ENCODE measurements at regions of chr1 and their contacts with region 1.

Region 1: DNA sequence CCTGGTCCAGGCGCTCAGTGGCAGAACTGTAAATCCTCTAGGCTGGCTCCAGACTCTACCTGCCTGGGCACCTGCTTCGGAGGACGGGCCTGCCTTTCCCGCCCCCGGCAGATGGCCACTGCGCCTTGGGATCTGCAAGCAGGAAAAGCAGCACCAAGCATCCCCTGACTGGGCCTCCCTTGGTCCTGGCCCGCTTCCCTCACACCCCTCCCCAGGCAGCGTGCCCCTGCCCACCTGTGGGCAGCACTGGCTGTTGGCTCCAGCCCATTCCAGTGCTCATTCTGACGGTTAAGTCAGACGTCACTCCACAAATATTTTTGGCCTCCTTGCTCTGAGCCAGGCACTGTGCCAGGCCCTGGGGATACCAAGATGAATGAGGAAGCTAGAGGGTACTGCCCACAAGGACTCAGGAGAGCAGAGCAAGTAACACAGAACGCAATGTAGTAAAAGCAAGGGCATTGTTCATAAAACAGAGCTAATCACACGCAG is 22.0 kb upstream of the BLACAT1 start:
- DNase-seq: peak; percentile 60 to 79 (median 79)
- ATAC-seq: peak; percentile 89
- H3K4me3 ChIP-seq: no peak overlapping the region
- H3K4me1 ChIP-seq: peaks cover 4% of the 10 kb centered on the region
- CTCF ChIP-seq: no peak

Region 2: GRCh38 chr1:205344066-205344928 is 133.5 kb before region 1 on chr1:
- intact Hi-C with region 1: loop called in 1 of 2 experiments (anchors 5 kb)
- DNase-seq: peak in 2 of 3 donors; percentile 40 to 62
- ATAC-seq: peak; percentile 82
- H3K4me3 ChIP-seq: no peak overlapping the region
- H3K4me1 ChIP-seq: peaks cover 12% of the 10 kb centered on the region
- CTCF ChIP-seq: no peak

Region 3: GRCh38 chr1:205519541-205520131 is 41.8 kb after region 1 on chr1:
- intact Hi-C with region 1: no loop called
- DNase-seq: no peak
- ATAC-seq: peak; percentile 44
- H3K4me3 ChIP-seq: no peak overlapping the region
- H3K4me1 ChIP-seq: peaks cover 23% of the 10 kb centered on the region
- CTCF ChIP-seq: no peak